ENCODE measurements at regions of chr11 and their contacts with region 1.

Region 1: GRCh38 chr11:46315033-46315738 is 32.1 kb upstream of the DGKZ start:
- DNase-seq: peak; percentile 57 to 83 (median 77)
- ATAC-seq: peak; percentile 94
- H3K4me3 ChIP-seq: no peak overlapping the region
- H3K4me3 Mint-ChIP-seq: no peak overlapping the region
- H3K27ac ChIP-seq: no peak overlapping the region
- H3K27ac Mint-ChIP-seq: no peak overlapping the region
- H3K4me1 ChIP-seq: peaks cover 19% of the 10 kb centered on the region
- H3K4me1 Mint-ChIP-seq: peaks cover 17% of the 10 kb centered on the region
- H3K27me3 ChIP-seq: no peaks in the 10 kb centered on the region
- H3K27me3 Mint-ChIP-seq: no peaks in the 10 kb centered on the region
- CTCF ChIP-seq: peak; percentile 99

Region 2: GRCh38 chr11:44861849-44862749 is 1453.1 kb before region 1 on chr11:
- CTCF ChIA-PET with region 1: no interaction called
- POLR2A ChIA-PET with region 1: no interaction called
- intact Hi-C with region 1: no loop called
- DNase-seq: peak; percentile 43 to 92 (median 79)
- ATAC-seq: peak; percentile 96
- H3K4me3 ChIP-seq: peak overlapping the region in 1 of 2 experiments; percentile 37
- H3K4me3 Mint-ChIP-seq: peak overlapping the region; percentile 44
- H3K27ac ChIP-seq: no peak overlapping the region
- H3K27ac Mint-ChIP-seq: peak overlapping the region; percentile 18
- H3K4me1 ChIP-seq: peaks cover 14% of the 10 kb centered on the region
- H3K4me1 Mint-ChIP-seq: peaks cover 25% of the 10 kb centered on the region
- H3K27me3 ChIP-seq: no peaks in the 10 kb centered on the region
- H3K27me3 Mint-ChIP-seq: no peaks in the 10 kb centered on the region
- CTCF ChIP-seq: no peak

Region 3: GRCh38 chr11:45834298-45834756 is 480.9 kb before region 1 on chr11:
- CTCF ChIA-PET with region 1: no interaction called
- POLR2A ChIA-PET with region 1: no interaction called
- intact Hi-C with region 1: no loop called
- DNase-seq: no peak
- ATAC-seq: no peak
- H3K4me3 ChIP-seq: no peak overlapping the region
- H3K4me3 Mint-ChIP-seq: no peak overlapping the region
- H3K27ac ChIP-seq: no peak overlapping the region
- H3K27ac Mint-ChIP-seq: no peak overlapping the region
- H3K4me1 ChIP-seq: peaks cover 6% of the 10 kb centered on the region
- H3K4me1 Mint-ChIP-seq: peaks cover 8% of the 10 kb centered on the region
- H3K27me3 ChIP-seq: peaks cover 0 to 2% of the 10 kb centered on the region in 2 experiments
- H3K27me3 Mint-ChIP-seq: peaks cover 3% of the 10 kb centered on the region
- CTCF ChIP-seq: no peak

Region 4: GRCh38 chr11:46127150-46127638 is 188.0 kb before region 1 on chr11:
- CTCF ChIA-PET with region 1: no interaction called
- POLR2A ChIA-PET with region 1: no interaction called
- intact Hi-C with region 1: loop called in 1 of 2 experiments (anchors 2 kb)
- DNase-seq: peak; percentile 23 to 87 (median 55)
- ATAC-seq: peak; percentile 98
- H3K4me3 ChIP-seq: no peak overlapping the region
- H3K4me3 Mint-ChIP-seq: peak overlapping the region; percentile 19
- H3K27ac ChIP-seq: peak overlapping the region in 1 of 2 experiments; percentile 2
- H3K27ac Mint-ChIP-seq: peak overlapping the region; percentile 0
- H3K4me1 ChIP-seq: peaks cover 9% of the 10 kb centered on the region
- H3K4me1 Mint-ChIP-seq: peaks cover 13% of the 10 kb centered on the region
- H3K27me3 ChIP-seq: no peaks in the 10 kb centered on the region
- H3K27me3 Mint-ChIP-seq: no peaks in the 10 kb centered on the region
- CTCF ChIP-seq: peak; percentile 41

Region 5: GRCh38 chr11:46332568-46333393 is 17.6 kb after region 1 on chr11:
- CTCF ChIA-PET with region 1: interaction called, 153 read pairs
- POLR2A ChIA-PET with region 1: interaction called, 9 read pairs
- intact Hi-C with region 1: loop called in 1 of 2 experiments (anchors 1 kb)
- DNase-seq: peak in 7 of 9 experiments; percentile 36 to 71 (median 58)
- ATAC-seq: peak; percentile 32
- H3K4me3 ChIP-seq: peak overlapping the region; percentile 43 to 54
- H3K4me3 Mint-ChIP-seq: peak overlapping the region; percentile 86
- H3K27ac ChIP-seq: peak overlapping the region in 1 of 2 experiments; percentile 6
- H3K27ac Mint-ChIP-seq: peak overlapping the region; percentile 95
- H3K4me1 ChIP-seq: peaks cover 62% of the 10 kb centered on the region
- H3K4me1 Mint-ChIP-seq: peaks cover 61% of the 10 kb centered on the region
- H3K27me3 ChIP-seq: peaks cover 0 to 12% of the 10 kb centered on the region in 2 experiments
- H3K27me3 Mint-ChIP-seq: no peaks in the 10 kb centered on the region
- CTCF ChIP-seq: no peak

Region 6: DNA sequence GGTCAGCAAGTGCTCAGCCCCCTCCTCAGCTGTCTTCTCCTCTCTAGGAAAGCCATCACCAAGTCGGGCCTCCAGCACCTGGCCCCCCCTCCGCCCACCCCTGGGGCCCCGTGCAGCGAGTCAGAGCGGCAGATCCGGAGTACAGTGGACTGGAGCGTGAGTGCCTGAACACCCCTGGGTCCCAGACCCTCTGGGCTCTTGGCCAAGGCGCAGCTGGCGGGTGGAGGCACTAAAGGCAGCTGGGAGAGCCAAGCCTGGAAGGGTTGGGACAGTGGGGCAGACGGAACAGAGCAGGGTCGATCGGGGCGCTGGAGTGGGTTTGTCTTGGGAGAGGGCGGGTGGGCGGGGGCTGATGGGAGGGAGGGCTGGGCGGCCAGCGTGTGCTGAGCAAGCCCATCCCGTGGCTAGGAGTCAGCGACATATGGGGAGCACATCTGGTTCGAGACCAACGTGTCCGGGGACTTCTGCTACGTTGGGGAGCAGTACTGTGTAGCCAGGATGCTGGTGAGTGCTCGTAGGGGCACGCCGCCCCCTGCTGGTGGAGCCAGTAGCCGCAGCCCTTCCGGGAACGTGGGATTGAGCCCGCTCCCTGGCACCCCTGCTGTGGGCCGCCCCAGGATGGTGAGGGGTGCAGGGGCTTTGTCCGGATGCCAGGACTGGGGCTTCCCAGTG is 52.2 kb after region 1 on chr11:
- CTCF ChIA-PET with region 1: interaction called, 12 read pairs
- POLR2A ChIA-PET with region 1: no interaction called
- intact Hi-C with region 1: no loop called
- DNase-seq: peak; percentile 54 to 90 (median 81)
- ATAC-seq: peak; percentile 96
- H3K4me3 ChIP-seq: no peak overlapping the region
- H3K4me3 Mint-ChIP-seq: no peak overlapping the region
- H3K27ac ChIP-seq: no peak overlapping the region
- H3K27ac Mint-ChIP-seq: no peak overlapping the region
- H3K4me1 ChIP-seq: peaks cover 50% of the 10 kb centered on the region
- H3K4me1 Mint-ChIP-seq: peaks cover 43% of the 10 kb centered on the region
- H3K27me3 ChIP-seq: no peaks in the 10 kb centered on the region
- H3K27me3 Mint-ChIP-seq: no peaks in the 10 kb centered on the region
- CTCF ChIP-seq: peak; percentile 72

Region 7: DNA sequence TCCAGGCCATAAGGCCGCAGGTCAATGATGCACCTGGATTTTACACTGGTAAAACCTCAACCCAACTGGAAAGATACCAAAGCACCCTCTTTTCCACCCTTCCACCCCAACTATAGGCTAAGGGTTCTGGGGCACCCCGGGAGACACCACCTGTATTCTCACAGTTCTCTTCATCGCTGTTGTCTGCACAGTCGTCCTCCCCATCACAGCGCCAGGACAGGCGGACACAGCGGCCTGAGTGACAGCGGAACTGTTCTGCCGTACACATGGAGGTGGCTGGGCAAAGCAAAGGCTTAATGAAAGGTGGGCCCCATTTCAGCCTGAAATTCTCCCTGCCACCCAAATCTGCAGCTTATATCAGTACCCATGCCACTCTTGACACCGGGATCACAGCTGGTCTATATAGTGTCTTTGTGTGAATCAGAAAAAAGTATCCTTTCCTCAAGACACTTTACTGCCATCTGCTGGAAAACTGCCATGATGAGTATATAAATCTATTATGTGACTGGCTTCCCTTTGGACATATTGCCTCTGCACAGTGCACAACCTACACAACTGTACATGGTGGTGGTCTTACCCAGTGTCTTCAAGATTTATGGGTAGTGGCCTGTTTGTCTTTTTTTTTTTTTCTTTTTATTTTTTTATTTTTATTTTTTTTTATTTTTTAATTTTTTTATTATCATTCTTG is 581.7 kb after region 1 on chr11:
- CTCF ChIA-PET with region 1: no interaction called
- POLR2A ChIA-PET with region 1: no interaction called
- intact Hi-C with region 1: no loop called
- DNase-seq: peak in 2 of 9 experiments; percentile 27
- ATAC-seq: no peak
- H3K4me3 ChIP-seq: no peak overlapping the region
- H3K4me3 Mint-ChIP-seq: no peak overlapping the region
- H3K27ac ChIP-seq: no peak overlapping the region
- H3K27ac Mint-ChIP-seq: no peak overlapping the region
- H3K4me1 ChIP-seq: no peaks in the 10 kb centered on the region
- H3K4me1 Mint-ChIP-seq: no peaks in the 10 kb centered on the region
- H3K27me3 ChIP-seq: no peaks in the 10 kb centered on the region
- H3K27me3 Mint-ChIP-seq: no peaks in the 10 kb centered on the region
- CTCF ChIP-seq: no peak

Measured in CD8-positive, alpha-beta T cell (primary cell).